ENCODE measurements at regions of chr1 and their contacts with region 1.

Region 1: GRCh38 chr1:243850452-243851256 is 611 bp upstream of the AKT3 start:
- DNase-seq: peak; percentile 79 to 88 (median 84)
- ATAC-seq: peak; percentile 64
- H3K4me3 ChIP-seq: peak overlapping the region; percentile 75
- H3K4me3 Mint-ChIP-seq: peak overlapping the region; percentile 90 to 97 (median 93)
- H3K27ac ChIP-seq: peak overlapping the region; percentile 97
- H3K27ac Mint-ChIP-seq: peak overlapping the region; percentile 88 to 99 (median 93)
- H3K4me1 ChIP-seq: peaks cover 4 to 5% of the 10 kb centered on the region in 2 donors
- H3K4me1 Mint-ChIP-seq: peaks cover 8 to 47% (median 30%) of the 10 kb centered on the region in 7 donors
- H3K27me3 ChIP-seq: no peaks in the 10 kb centered on the region
- H3K27me3 Mint-ChIP-seq: peaks cover 0 to 59% (median 0%) of the 10 kb centered on the region in 5 donors

Region 2: GRCh38 chr1:243416495-243416894 is 434.2 kb before region 1 on chr1:
- CTCF ChIA-PET with region 1: no interaction called
- POLR2A ChIA-PET with region 1: no interaction called
- intact Hi-C with region 1: loop called in 1 of 2 experiments (anchors 5 kb)
- DNase-seq: no peak
- ATAC-seq: no peak
- H3K4me3 ChIP-seq: no peak overlapping the region
- H3K4me3 Mint-ChIP-seq: peak overlapping the region in 1 of 10 donors; percentile 79
- H3K27ac ChIP-seq: no peak overlapping the region
- H3K27ac Mint-ChIP-seq: peak overlapping the region in 1 of 9 donors; percentile 75
- H3K4me1 ChIP-seq: peaks cover 5 to 7% of the 10 kb centered on the region in 2 donors
- H3K4me1 Mint-ChIP-seq: peaks cover 8 to 61% (median 24%) of the 10 kb centered on the region in 7 donors
- H3K27me3 ChIP-seq: no peaks in the 10 kb centered on the region
- H3K27me3 Mint-ChIP-seq: no peaks in the 10 kb centered on the region

Region 3: DNA sequence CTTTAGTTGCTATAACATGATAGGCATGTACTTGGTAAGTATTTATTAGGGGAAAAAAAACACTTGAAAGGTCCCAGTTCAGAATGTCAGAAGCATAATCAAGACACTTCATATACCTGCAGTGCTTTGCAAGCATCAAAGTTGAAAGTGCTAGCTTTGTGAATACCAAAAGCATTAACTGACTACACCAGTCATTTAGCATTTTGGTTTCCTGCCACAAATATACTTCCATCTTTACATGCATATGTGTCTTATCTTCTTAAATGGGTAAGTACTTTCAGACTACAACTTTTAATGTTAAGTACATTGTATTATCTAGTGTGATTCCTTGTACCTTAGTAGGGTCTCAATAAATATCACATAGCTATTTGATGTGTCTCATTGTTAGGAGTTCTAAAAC is 44.3 kb before region 1 on chr1:
- CTCF ChIA-PET with region 1: no interaction called
- POLR2A ChIA-PET with region 1: no interaction called
- intact Hi-C with region 1: loop called in 1 of 2 experiments (anchors 2 kb)
- DNase-seq: peak in 3 of 9 donors; percentile 7 to 17 (median 10)
- ATAC-seq: no peak
- H3K4me3 ChIP-seq: no peak overlapping the region
- H3K4me3 Mint-ChIP-seq: peak overlapping the region in 4 of 10 donors; percentile 21 to 87 (median 60)
- H3K27ac ChIP-seq: no peak overlapping the region
- H3K27ac Mint-ChIP-seq: peak overlapping the region in 8 of 9 donors; percentile 14 to 95 (median 40)
- H3K4me1 ChIP-seq: peaks cover 0 to 20% of the 10 kb centered on the region in 2 donors
- H3K4me1 Mint-ChIP-seq: peaks cover 40 to 90% (median 76%) of the 10 kb centered on the region in 7 donors
- H3K27me3 ChIP-seq: no peaks in the 10 kb centered on the region
- H3K27me3 Mint-ChIP-seq: no peaks in the 10 kb centered on the region

Region 4: GRCh38 chr1:243968413-243968812 is 117.8 kb after region 1 on chr1:
- CTCF ChIA-PET with region 1: no interaction called
- POLR2A ChIA-PET with region 1: no interaction called
- intact Hi-C with region 1: no loop called
- DNase-seq: no peak
- ATAC-seq: no peak
- H3K4me3 ChIP-seq: no peak overlapping the region
- H3K4me3 Mint-ChIP-seq: no peak overlapping the region
- H3K27ac ChIP-seq: no peak overlapping the region
- H3K27ac Mint-ChIP-seq: no peak overlapping the region
- H3K4me1 ChIP-seq: no peaks in the 10 kb centered on the region
- H3K4me1 Mint-ChIP-seq: peaks cover 0 to 1% (median 0%) of the 10 kb centered on the region in 7 donors
- H3K27me3 ChIP-seq: no peaks in the 10 kb centered on the region
- H3K27me3 Mint-ChIP-seq: peaks cover 0 to 6% (median 0%) of the 10 kb centered on the region in 5 donors

Region 5: DNA sequence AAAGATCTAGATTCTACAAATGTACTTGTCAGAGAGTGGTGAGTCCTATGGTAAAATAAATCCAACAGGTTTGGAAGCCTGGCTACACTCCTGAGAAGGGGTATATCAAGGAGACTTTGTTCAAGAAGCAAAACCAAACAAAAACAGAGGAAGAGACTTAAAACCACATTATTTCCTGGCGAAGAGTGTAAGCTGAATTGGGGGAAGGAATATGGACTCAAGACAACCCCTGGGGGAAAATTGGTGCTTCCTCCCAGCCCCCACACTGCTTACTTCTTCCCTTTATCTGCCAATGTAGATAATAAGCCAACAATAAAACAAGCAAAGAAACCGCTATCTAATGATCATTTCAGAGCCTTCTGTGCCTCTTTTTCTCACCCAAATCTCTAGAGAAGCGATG is 152.1 kb after region 1 on chr1:
- CTCF ChIA-PET with region 1: no interaction called
- POLR2A ChIA-PET with region 1: no interaction called
- intact Hi-C with region 1: loop called in 1 of 2 experiments (anchors 5 kb)
- DNase-seq: peak in 3 of 9 donors; percentile 2 to 18 (median 12)
- ATAC-seq: peak; percentile 48
- H3K4me3 ChIP-seq: no peak overlapping the region
- H3K4me3 Mint-ChIP-seq: peak overlapping the region; percentile 8 to 59 (median 34)
- H3K27ac ChIP-seq: no peak overlapping the region
- H3K27ac Mint-ChIP-seq: peak overlapping the region in 8 of 9 donors; percentile 1 to 71 (median 8)
- H3K4me1 ChIP-seq: peaks cover 0 to 16% of the 10 kb centered on the region in 2 donors
- H3K4me1 Mint-ChIP-seq: peaks cover 15 to 28% (median 21%) of the 10 kb centered on the region in 7 donors
- H3K27me3 ChIP-seq: no peaks in the 10 kb centered on the region
- H3K27me3 Mint-ChIP-seq: no peaks in the 10 kb centered on the region

Region 6: DNA sequence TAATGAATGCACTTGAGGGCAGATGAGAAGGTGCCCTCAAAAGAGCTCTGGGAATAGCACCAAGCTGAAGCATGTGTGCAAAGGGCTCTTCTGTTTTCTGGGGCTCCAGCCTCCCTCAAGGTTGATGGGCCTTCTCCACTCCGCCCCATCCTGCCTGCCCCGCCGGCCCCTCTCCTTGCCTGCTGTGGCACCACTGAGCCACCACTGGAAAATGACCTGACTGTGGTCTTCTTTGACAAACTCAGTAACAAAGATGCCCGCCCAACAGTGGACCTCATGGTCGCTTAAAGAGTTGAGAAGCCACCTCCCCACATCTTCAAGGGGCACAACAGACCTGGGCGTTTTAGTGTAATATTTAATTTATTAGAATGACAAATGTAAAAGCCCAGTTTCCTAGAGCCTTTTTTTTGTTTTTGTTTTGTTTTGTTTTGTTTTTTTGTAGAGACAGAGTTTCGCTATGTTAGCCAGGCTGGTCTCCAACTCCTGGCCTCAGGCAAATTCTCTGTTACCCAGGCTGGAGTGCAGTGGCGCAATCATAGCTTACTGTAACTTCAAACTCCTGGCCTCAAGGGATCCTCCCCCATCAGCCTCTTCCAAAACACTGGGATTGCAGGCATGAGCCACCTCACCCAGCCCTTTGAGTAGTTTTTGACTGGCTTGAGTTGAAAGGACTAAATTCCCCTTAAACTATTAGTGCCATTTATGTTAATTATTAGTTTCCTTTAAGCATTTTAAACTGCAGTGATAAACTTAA is 171.5 kb after region 1 on chr1:
- CTCF ChIA-PET with region 1: no interaction called
- POLR2A ChIA-PET with region 1: no interaction called
- intact Hi-C with region 1: no loop called
- DNase-seq: no peak
- ATAC-seq: no peak
- H3K4me3 ChIP-seq: no peak overlapping the region
- H3K4me3 Mint-ChIP-seq: no peak overlapping the region
- H3K27ac ChIP-seq: no peak overlapping the region
- H3K27ac Mint-ChIP-seq: no peak overlapping the region
- H3K4me1 ChIP-seq: no peaks in the 10 kb centered on the region
- H3K4me1 Mint-ChIP-seq: peaks cover 0 to 4% (median 0%) of the 10 kb centered on the region in 7 donors
- H3K27me3 ChIP-seq: no peaks in the 10 kb centered on the region
- H3K27me3 Mint-ChIP-seq: peaks cover 0 to 15% (median 8%) of the 10 kb centered on the region in 5 donors

Region 7: GRCh38 chr1:244296447-244296846 is 445.8 kb after region 1 on chr1:
- CTCF ChIA-PET with region 1: no interaction called
- POLR2A ChIA-PET with region 1: no interaction called
- intact Hi-C with region 1: loop called in 1 of 2 experiments (anchors 5 kb)
- DNase-seq: no peak
- ATAC-seq: no peak
- H3K4me3 ChIP-seq: no peak overlapping the region
- H3K4me3 Mint-ChIP-seq: no peak overlapping the region
- H3K27ac ChIP-seq: no peak overlapping the region
- H3K27ac Mint-ChIP-seq: no peak overlapping the region
- H3K4me1 ChIP-seq: peaks cover 0 to 3% of the 10 kb centered on the region in 2 donors
- H3K4me1 Mint-ChIP-seq: peaks cover 6 to 16% (median 8%) of the 10 kb centered on the region in 7 donors
- H3K27me3 ChIP-seq: no peaks in the 10 kb centered on the region
- H3K27me3 Mint-ChIP-seq: peaks cover 0 to 8% (median 0%) of the 10 kb centered on the region in 5 donors

Region 8: GRCh38 chr1:244854865-244855578 is 1004.4 kb after region 1 on chr1:
- CTCF ChIA-PET with region 1: no interaction called
- POLR2A ChIA-PET with region 1: no interaction called
- intact Hi-C with region 1: loop called in 1 of 2 experiments (anchors 5 kb)
- DNase-seq: peak in 1 of 9 donors; percentile 17
- ATAC-seq: peak; percentile 24
- H3K4me3 ChIP-seq: no peak overlapping the region
- H3K4me3 Mint-ChIP-seq: peak overlapping the region; percentile 65 to 82 (median 76)
- H3K27ac ChIP-seq: peak overlapping the region; percentile 42
- H3K27ac Mint-ChIP-seq: peak overlapping the region; percentile 44 to 99 (median 87)
- H3K4me1 ChIP-seq: peaks cover 67 to 71% of the 10 kb centered on the region in 2 donors
- H3K4me1 Mint-ChIP-seq: peaks cover 54 to 100% (median 96%) of the 10 kb centered on the region in 7 donors
- H3K27me3 ChIP-seq: no peaks in the 10 kb centered on the region
- H3K27me3 Mint-ChIP-seq: no peaks in the 10 kb centered on the region